CD4-positive, alpha-beta memory T cell (primary cell): ENCODE measurements at regions of chr12 and their contacts with region 1.

Region 1: GRCh38 chr12:575948-576612 is 87.2 kb downstream of the NINJ2 start:
- DNase-seq: peak; percentile 71 to 89 (median 82)
- H3K4me3 ChIP-seq: peak overlapping the region in 1 of 2 donors; percentile 38
- H3K4me3 Mint-ChIP-seq: peak overlapping the region in 7 of 8 donors; percentile 12 to 74 (median 68)
- H3K27ac ChIP-seq: no peak overlapping the region
- H3K27ac Mint-ChIP-seq: peak overlapping the region in 6 of 7 donors; percentile 65 to 92 (median 79)
- H3K4me1 ChIP-seq: peaks cover 15% of the 10 kb centered on the region
- H3K4me1 Mint-ChIP-seq: peaks cover 6 to 23% (median 14%) of the 10 kb centered on the region in 4 donors
- H3K27me3 ChIP-seq: no peaks in the 10 kb centered on the region
- H3K27me3 Mint-ChIP-seq: no peaks in the 10 kb centered on the region

Region 2: GRCh38 chr12:563250-563781 is 12.8 kb before region 1 on chr12:
- CTCF ChIA-PET with region 1: interaction called, 43 read pairs
- POLR2A ChIA-PET with region 1: no interaction called
- intact Hi-C with region 1: no loop called
- DNase-seq: peak; percentile 74 to 81 (median 78)
- H3K4me3 ChIP-seq: peak overlapping the region; percentile 44 to 51
- H3K4me3 Mint-ChIP-seq: peak overlapping the region; percentile 79 to 93 (median 86)
- H3K27ac ChIP-seq: peak overlapping the region; percentile 71
- H3K27ac Mint-ChIP-seq: peak overlapping the region; percentile 88 to 97 (median 93)
- H3K4me1 ChIP-seq: peaks cover 60% of the 10 kb centered on the region
- H3K4me1 Mint-ChIP-seq: peaks cover 55 to 83% (median 69%) of the 10 kb centered on the region in 4 donors
- H3K27me3 ChIP-seq: no peaks in the 10 kb centered on the region
- H3K27me3 Mint-ChIP-seq: no peaks in the 10 kb centered on the region

Region 3: GRCh38 chr12:614411-614970 is 38.4 kb after region 1 on chr12:
- CTCF ChIA-PET with region 1: interaction called, 17 read pairs
- POLR2A ChIA-PET with region 1: no interaction called
- intact Hi-C with region 1: no loop called
- DNase-seq: peak in 3 of 5 donors; percentile 10 to 18 (median 18)
- H3K4me3 ChIP-seq: no peak overlapping the region
- H3K4me3 Mint-ChIP-seq: no peak overlapping the region
- H3K27ac ChIP-seq: no peak overlapping the region
- H3K27ac Mint-ChIP-seq: peak overlapping the region in 2 of 7 donors; percentile 36 to 66
- H3K4me1 ChIP-seq: peaks cover 20% of the 10 kb centered on the region
- H3K4me1 Mint-ChIP-seq: peaks cover 16 to 41% (median 28%) of the 10 kb centered on the region in 4 donors
- H3K27me3 ChIP-seq: no peaks in the 10 kb centered on the region
- H3K27me3 Mint-ChIP-seq: no peaks in the 10 kb centered on the region

Region 4: DNA sequence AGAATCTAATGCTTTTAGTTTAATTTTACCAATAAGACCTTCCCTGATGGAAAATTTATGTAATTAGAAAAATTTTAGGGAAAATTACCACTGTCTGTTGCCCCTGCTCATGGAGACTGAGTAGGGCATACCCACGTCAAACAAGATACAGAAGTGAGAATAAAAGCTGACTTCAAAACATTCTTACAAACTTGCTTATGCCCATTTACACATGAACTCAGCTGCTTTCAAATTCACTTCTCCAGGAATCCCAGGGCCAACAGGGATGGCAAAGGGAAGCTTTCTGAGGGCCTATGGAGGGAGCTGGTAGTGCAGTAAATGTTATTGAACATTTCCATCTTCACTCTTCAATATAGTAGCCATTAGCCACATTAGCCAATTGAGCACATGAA is 92.0 kb after region 1 on chr12:
- CTCF ChIA-PET with region 1: interaction called, 12 read pairs
- POLR2A ChIA-PET with region 1: interaction called, 3 read pairs
- intact Hi-C with region 1: no loop called
- DNase-seq: no peak
- H3K4me3 ChIP-seq: no peak overlapping the region
- H3K4me3 Mint-ChIP-seq: peak overlapping the region in 1 of 8 donors; percentile 79
- H3K27ac ChIP-seq: no peak overlapping the region
- H3K27ac Mint-ChIP-seq: peak overlapping the region in 5 of 7 donors; percentile 0 to 46 (median 15)
- H3K4me1 ChIP-seq: peaks cover 68% of the 10 kb centered on the region
- H3K4me1 Mint-ChIP-seq: peaks cover 42 to 74% (median 64%) of the 10 kb centered on the region in 4 donors
- H3K27me3 ChIP-seq: no peaks in the 10 kb centered on the region
- H3K27me3 Mint-ChIP-seq: no peaks in the 10 kb centered on the region

Region 5: GRCh38 chr12:779745-780734 is 204.0 kb after region 1 on chr12:
- CTCF ChIA-PET with region 1: interaction called, 22 read pairs
- POLR2A ChIA-PET with region 1: interaction called, 7 read pairs
- intact Hi-C with region 1: no loop called
- DNase-seq: no peak
- H3K4me3 ChIP-seq: peak overlapping the region in 1 of 2 donors; percentile 16
- H3K4me3 Mint-ChIP-seq: peak overlapping the region; percentile 78 to 94 (median 83)
- H3K27ac ChIP-seq: peak overlapping the region; percentile 16
- H3K27ac Mint-ChIP-seq: peak overlapping the region; percentile 76 to 93 (median 82)
- H3K4me1 ChIP-seq: peaks cover 81% of the 10 kb centered on the region
- H3K4me1 Mint-ChIP-seq: peaks cover 53 to 78% (median 64%) of the 10 kb centered on the region in 4 donors
- H3K27me3 ChIP-seq: no peaks in the 10 kb centered on the region
- H3K27me3 Mint-ChIP-seq: no peaks in the 10 kb centered on the region